Mammary epithelial cell (primary cell): ENCODE measurements at regions of chr9 and their contacts with region 1.

Region 1: GRCh38 chr9:136204838-136205706 is at the start of gene LHX3:
- DNase-seq: no peak
- H3K4me3 ChIP-seq: no peak within 1 kb of the TSS
- H3K27ac ChIP-seq: no peak within 1 kb of the TSS
- H3K4me1 ChIP-seq: no peaks in the 10 kb centered on the region
- H3K27me3 ChIP-seq: peaks cover 43% of the 10 kb centered on the region
- CTCF ChIP-seq: no peak
- total RNA-seq, gene LHX3: not detected

Region 2: GRCh38 chr9:136118320-136119060 is 86.6 kb before region 1 on chr9 and contains the start of gene TMEM250:
- CTCF ChIA-PET with region 1: no interaction called
- dilution Hi-C with region 1: no loop called
- in situ Hi-C with region 1: no loop called
- intact Hi-C with region 1: no loop called
- DNase-seq: peak; percentile 96
- H3K4me3 ChIP-seq: peak within 1 kb of the TSS; percentile 68 to 86 (median 84)
- H3K27ac ChIP-seq: peak within 1 kb of the TSS; percentile 73
- H3K4me1 ChIP-seq: peaks cover 28% of the 10 kb centered on the region
- H3K27me3 ChIP-seq: no peaks in the 10 kb centered on the region
- CTCF ChIP-seq: no peak
- total RNA-seq, gene TMEM250: 33.8 to 49.8 TPM

Region 3: DNA sequence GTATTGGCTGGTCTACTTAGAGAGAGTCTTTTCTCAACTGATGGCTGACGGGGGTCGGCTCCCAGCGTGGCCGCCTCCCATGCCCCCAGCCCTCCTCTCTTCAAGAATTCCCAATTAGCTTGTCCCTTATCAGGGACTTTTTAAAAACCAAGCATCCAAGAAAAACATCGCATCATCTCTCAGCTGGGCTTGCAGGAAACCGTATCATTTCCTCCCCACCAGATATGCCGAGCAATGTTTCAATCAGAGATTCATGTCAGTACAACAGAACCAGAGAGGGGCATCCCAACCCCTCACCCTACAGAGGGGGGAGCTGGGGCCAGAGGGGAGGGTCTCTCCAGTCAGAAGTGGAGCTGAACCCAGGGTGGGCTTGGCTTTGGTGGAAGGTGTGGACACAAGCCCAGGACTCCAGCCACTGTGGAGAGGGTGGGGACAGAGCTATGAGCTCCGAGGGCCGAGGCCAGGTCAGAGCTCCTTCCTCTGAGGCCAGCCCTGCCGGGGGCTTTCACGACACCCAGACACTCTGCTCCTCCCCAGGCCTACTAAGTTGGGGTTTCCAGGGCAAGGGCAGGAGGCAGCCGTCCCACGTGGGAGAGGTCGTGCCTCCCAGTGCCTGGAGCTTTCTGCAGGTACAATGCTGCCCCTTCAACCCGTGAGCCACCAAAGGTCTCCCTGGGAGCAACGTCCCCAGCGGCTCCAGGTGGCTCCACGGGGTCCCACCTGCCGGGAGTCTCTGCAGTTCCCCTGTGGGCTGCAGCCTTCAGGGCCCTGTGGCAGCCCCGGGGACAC is 47.4 kb before region 1 on chr9:
- CTCF ChIA-PET with region 1: no interaction called
- dilution Hi-C with region 1: loop called (anchors 5 kb)
- in situ Hi-C with region 1: no loop called
- intact Hi-C with region 1: no loop called
- DNase-seq: no peak
- H3K4me3 ChIP-seq: no peak overlapping the region
- H3K27ac ChIP-seq: no peak overlapping the region
- H3K4me1 ChIP-seq: no peaks in the 10 kb centered on the region
- H3K27me3 ChIP-seq: no peaks in the 10 kb centered on the region
- CTCF ChIP-seq: no peak

Region 4: GRCh38 chr9:136244122-136244968 is 39.3 kb after region 1 on chr9:
- CTCF ChIA-PET with region 1: no interaction called
- dilution Hi-C with region 1: loop called (anchors 5 kb)
- in situ Hi-C with region 1: no loop called
- intact Hi-C with region 1: no loop called
- DNase-seq: no peak
- H3K4me3 ChIP-seq: peak overlapping the region; percentile 72 to 81 (median 80)
- H3K27ac ChIP-seq: peak overlapping the region; percentile 33
- H3K4me1 ChIP-seq: peaks cover 7% of the 10 kb centered on the region
- H3K27me3 ChIP-seq: no peaks in the 10 kb centered on the region
- CTCF ChIP-seq: no peak

Region 5: GRCh38 chr9:136275655-136276429 is 70.8 kb after region 1 on chr9:
- CTCF ChIA-PET with region 1: no interaction called
- dilution Hi-C with region 1: loop called (anchors 5 kb)
- in situ Hi-C with region 1: no loop called
- intact Hi-C with region 1: no loop called
- DNase-seq: no peak
- H3K4me3 ChIP-seq: no peak overlapping the region
- H3K27ac ChIP-seq: no peak overlapping the region
- H3K4me1 ChIP-seq: peaks cover 11% of the 10 kb centered on the region
- H3K27me3 ChIP-seq: peaks cover 12% of the 10 kb centered on the region
- CTCF ChIP-seq: no peak